MCF 10A (cell line): ENCODE measurements at regions of chr17 and their contacts with region 1.

Region 1: GRCh38 chr17:50661795-50662391 is 27.2 kb downstream of the ABCC3 start:
- DNase-seq: peak; percentile 99
- H3K4me3 Mint-ChIP-seq: peak overlapping the region; percentile 47
- H3K27ac Mint-ChIP-seq: peak overlapping the region; percentile 77
- H3K4me1 Mint-ChIP-seq: peaks cover 45% of the 10 kb centered on the region
- H3K27me3 Mint-ChIP-seq: no peaks in the 10 kb centered on the region
- CTCF ChIP-seq: no peak

Region 2: GRCh38 chr17:50611634-50612033 is 50.3 kb before region 1 on chr17:
- CTCF ChIA-PET with region 1: no interaction called
- POLR2A ChIA-PET with region 1: no interaction called
- intact Hi-C with region 1: no loop called
- DNase-seq: no peak
- H3K4me3 Mint-ChIP-seq: no peak overlapping the region
- H3K27ac Mint-ChIP-seq: no peak overlapping the region
- H3K4me1 Mint-ChIP-seq: no peaks in the 10 kb centered on the region
- H3K27me3 Mint-ChIP-seq: peaks cover 7% of the 10 kb centered on the region
- CTCF ChIP-seq: no peak

Region 3: GRCh38 chr17:50649042-50649904 is 12.6 kb before region 1 on chr17:
- CTCF ChIA-PET with region 1: interaction called, 7 read pairs
- POLR2A ChIA-PET with region 1: interaction called, 24 read pairs
- intact Hi-C with region 1: no loop called
- DNase-seq: peak; percentile 77
- H3K4me3 Mint-ChIP-seq: no peak overlapping the region
- H3K27ac Mint-ChIP-seq: no peak overlapping the region
- H3K4me1 Mint-ChIP-seq: peaks cover 19% of the 10 kb centered on the region
- H3K27me3 Mint-ChIP-seq: no peaks in the 10 kb centered on the region
- CTCF ChIP-seq: no peak

Region 4: DNA sequence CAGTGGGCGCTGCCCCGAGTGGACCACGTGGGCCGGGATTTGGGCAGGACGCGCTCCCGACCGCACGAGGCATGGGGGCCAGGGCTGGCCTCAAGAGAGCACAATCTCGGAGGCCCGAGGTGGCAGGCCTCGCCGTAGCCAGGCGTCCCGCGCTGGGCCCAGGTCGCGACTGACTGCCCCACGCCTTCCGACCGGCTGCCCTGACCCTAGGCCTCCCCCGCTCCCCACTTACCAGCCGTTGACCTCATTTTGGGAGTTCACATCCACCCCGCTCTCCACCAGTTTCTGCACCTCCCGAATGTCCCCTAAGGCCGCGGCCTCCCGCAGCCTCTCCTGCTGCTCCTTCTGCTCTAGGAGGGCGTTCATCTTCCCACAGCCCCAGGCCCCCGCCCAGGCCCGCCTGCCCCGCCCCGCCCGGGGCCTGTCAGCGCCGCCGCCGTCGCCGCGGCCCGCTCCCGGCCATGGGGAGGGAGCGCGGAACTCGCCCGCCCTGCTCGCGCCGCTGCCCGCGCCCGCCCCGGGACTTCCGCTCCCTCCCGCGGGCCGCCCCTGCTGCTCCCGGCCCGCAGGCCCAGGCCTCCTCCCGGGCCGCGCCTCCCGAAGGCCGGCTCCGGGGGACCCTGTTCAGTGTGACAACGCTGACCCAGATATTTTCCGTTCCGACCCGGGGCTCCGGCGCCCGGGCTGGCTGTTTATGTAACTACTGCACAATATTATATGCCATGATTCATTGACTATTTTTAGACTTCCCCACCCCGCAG is 45.6 kb after region 1 on chr17 and contains the start of gene ANKRD40:
- CTCF ChIA-PET with region 1: no interaction called
- POLR2A ChIA-PET with region 1: interaction called, 19 read pairs
- intact Hi-C with region 1: no loop called
- DNase-seq: peak; percentile 94
- H3K4me3 Mint-ChIP-seq: peak within 1 kb of the TSS; percentile 95
- H3K27ac Mint-ChIP-seq: peak within 1 kb of the TSS; percentile 76
- H3K4me1 Mint-ChIP-seq: peaks cover 25% of the 10 kb centered on the region
- H3K27me3 Mint-ChIP-seq: no peaks in the 10 kb centered on the region
- CTCF ChIP-seq: no peak
- total RNA-seq, gene ANKRD40: 42.2 and 46.4 TPM in 2 replicates